Naive thymus-derived CD8-positive, alpha-beta T cell (primary cell): ENCODE measurements at regions of chr17 and their contacts with region 1.

Region 1: DNA sequence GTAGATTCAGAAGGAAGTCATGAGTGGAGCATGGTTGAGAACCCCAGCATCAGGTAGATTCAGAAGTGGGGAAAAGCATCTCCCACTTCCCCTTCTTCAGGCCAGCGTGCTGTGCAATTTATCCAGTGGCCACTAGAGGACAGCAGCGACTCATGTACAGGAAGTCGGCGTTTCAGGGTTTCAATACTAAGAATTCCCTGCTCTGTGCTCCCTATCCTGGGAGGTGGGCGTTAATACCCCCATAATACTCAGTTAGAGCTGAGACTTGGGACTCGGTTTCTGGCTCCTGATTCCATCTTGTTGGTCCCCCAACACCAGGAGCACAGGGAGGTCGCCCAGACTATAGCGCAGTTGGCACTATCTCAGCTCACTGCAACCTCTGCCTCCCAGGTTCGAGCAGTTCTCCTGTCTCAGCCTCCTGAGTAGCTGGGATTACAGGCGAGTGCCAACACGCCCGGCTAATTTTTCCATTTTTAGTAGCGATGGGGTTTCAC is 75.3 kb upstream of the AMZ2 start:
- DNase-seq: peak; percentile 57 to 84 (median 70)
- ATAC-seq: peak; percentile 71 to 74
- H3K4me3 Mint-ChIP-seq: no peak overlapping the region
- H3K27ac Mint-ChIP-seq: no peak overlapping the region
- H3K4me1 Mint-ChIP-seq: peaks cover 16 to 37% (median 32%) of the 10 kb centered on the region in 4 donors
- H3K27me3 Mint-ChIP-seq: no peaks in the 10 kb centered on the region

Region 2: DNA sequence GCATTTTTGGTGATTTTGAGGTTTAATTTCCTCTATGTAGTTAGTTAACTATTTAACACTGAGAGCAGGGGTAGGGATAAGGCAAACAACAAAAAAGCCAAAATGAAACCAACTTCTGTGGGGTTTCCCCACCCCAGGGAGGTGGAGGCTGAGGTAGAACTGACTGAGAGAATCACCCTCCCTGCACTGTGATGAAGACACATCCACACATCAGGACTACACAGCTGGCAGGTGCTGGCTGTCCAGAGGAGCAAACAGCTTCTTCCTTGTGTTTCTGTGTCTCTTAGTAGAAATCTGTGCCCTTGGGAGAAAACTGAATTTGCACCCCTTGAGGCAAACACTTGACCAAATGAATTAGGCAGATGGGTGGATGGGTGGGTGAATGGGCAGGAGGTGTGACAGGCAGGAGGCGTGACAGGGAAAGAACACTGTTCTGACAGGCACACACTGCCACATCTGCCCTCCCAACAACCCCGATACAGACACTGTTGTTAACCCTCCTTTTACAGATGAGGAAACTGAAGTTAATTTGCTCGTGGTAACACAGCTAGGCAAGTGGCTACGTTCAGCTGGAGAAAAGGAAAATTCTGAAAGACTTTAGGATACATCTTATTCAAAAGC is 12.4 kb after region 1 on chr17:
- POLR2A ChIA-PET with region 1: interaction called, 12 read pairs
- DNase-seq: peak in 5 of 10 donors; percentile 41 to 63 (median 58)
- ATAC-seq: peak; percentile 76 to 79
- H3K4me3 Mint-ChIP-seq: peak overlapping the region; percentile 45 to 94 (median 64)
- H3K27ac Mint-ChIP-seq: peak overlapping the region; percentile 57 to 94 (median 86)
- H3K4me1 Mint-ChIP-seq: peaks cover 19 to 71% (median 52%) of the 10 kb centered on the region in 4 donors
- H3K27me3 Mint-ChIP-seq: no peaks in the 10 kb centered on the region